Heart right ventricle (tissue), 16 donors: ENCODE measurements at regions of chr14 and their contacts with region 1.

Region 1: DNA sequence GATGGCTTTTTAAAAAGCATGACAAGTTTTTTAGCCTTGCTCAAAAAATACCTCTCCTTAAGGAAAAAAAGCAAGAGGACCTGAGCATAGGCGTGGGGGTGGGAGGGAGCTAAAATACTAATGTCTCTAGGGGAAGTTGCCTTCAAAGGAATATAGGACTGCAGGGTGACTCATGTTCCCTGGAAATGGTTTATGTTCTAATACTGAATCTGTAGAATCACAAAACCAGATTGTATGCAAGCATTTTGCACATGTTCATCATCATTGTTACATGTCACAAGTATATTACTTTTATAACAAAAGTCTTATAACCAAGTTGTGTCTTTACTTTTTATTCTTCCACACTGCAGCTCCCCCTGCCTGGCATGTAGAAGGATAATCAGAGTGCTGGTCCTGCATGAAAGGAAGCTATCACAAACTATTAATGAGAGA is 36.6 kb downstream of the GPR135 start:
- DNase-seq: no peak
- ATAC-seq: peak in 6 of 8 donors; percentile 21 to 48 (median 35)
- H3K4me3 ChIP-seq: no peak overlapping the region
- H3K27ac ChIP-seq: peak overlapping the region in 9 of 10 donors; percentile 17 to 74 (median 68)
- H3K4me1 ChIP-seq: peaks cover 0 to 63% (median 43%) of the 10 kb centered on the region in 9 donors
- H3K27me3 ChIP-seq: no peaks in the 10 kb centered on the region
- CTCF ChIP-seq: peak in 7 of 9 donors; percentile 30 to 66 (median 46)

Region 2: DNA sequence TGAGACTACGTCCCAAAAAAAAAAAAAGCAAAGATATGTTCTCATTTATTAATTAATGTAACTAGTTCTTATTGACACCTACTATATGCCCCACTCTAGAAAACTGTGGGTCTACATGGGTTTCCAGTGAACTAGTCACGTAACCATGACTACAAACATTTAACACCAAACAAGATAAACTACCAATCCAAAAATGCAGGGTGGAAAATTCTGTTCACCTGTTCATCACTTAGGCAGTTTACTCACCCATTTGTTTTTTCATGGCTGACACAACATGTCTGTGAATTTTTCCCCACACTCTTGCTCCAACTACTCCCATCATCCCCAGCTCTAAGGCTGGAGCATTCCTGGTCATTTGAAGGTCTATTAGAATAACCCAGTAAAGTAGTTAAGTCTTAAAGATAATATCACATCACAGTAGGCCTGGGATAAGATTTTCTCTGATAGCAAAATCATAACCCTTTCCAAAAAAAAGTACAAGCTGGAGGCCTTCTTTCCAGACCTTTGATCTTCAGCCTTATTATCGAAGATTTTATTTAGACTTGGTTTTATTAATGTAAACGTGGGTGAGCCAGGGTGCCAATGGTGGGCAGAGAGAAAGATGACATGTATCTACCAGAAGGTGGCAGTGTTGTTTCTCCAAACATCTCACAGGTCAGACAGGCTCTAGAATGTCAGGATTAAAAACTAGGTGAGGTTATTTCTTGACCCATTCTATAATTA is 301.7 kb before region 1 on chr14:
- intact Hi-C with region 1: loop called in 1 of 10 experiments (anchors 5 kb)
- DNase-seq: peak in 1 of 2 donors; percentile 32
- ATAC-seq: peak in 7 of 8 donors; percentile 79 to 91 (median 89)
- H3K4me3 ChIP-seq: no peak overlapping the region
- H3K27ac ChIP-seq: no peak overlapping the region
- H3K4me1 ChIP-seq: peaks cover 0 to 9% (median 0%) of the 10 kb centered on the region in 9 donors
- H3K27me3 ChIP-seq: no peaks in the 10 kb centered on the region
- CTCF ChIP-seq: peak; percentile 60 to 88 (median 81)

Region 3: GRCh38 chr14:59254146-59254941 is 174.3 kb before region 1 on chr14:
- intact Hi-C with region 1: loop called in 2 of 10 experiments (anchors 10 kb)
- DNase-seq: peak; percentile 60 to 89
- ATAC-seq: peak; percentile 84 to 94 (median 90)
- H3K4me3 ChIP-seq: peak overlapping the region in 1 of 10 donors; percentile 11
- H3K27ac ChIP-seq: peak overlapping the region; percentile 74 to 94 (median 86)
- H3K4me1 ChIP-seq: peaks cover 10 to 85% (median 59%) of the 10 kb centered on the region in 9 donors
- H3K27me3 ChIP-seq: no peaks in the 10 kb centered on the region
- CTCF ChIP-seq: peak in 2 of 9 donors; percentile 14 to 30

Region 4: DNA sequence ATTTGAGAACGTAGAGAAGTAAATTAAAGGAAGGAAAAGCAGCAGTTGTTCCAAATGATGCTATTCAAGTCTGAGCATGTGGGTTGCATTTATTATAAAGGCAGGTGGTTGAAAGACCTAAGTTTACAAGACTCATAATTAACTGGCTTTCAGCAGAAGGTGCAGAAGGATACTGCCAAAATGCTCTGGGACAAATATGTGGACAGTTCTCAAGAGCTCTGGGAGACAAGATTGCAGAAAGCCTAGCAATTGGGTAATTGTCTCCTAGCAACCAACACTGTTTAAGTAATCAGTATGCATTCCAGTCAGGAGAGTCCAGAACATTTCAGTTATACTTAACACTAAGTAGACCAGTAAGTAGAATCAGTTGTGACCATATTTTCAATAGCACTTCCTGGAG is 94.9 kb before region 1 on chr14:
- intact Hi-C with region 1: loop called in 7 of 10 experiments (anchors 5 to 10 kb)
- DNase-seq: peak in 1 of 2 donors; percentile 66
- ATAC-seq: peak; percentile 84 to 95 (median 92)
- H3K4me3 ChIP-seq: no peak overlapping the region
- H3K27ac ChIP-seq: peak overlapping the region; percentile 57 to 89 (median 86)
- H3K4me1 ChIP-seq: peaks cover 21 to 79% (median 71%) of the 10 kb centered on the region in 9 donors
- H3K27me3 ChIP-seq: no peaks in the 10 kb centered on the region
- CTCF ChIP-seq: no peak

Region 5: DNA sequence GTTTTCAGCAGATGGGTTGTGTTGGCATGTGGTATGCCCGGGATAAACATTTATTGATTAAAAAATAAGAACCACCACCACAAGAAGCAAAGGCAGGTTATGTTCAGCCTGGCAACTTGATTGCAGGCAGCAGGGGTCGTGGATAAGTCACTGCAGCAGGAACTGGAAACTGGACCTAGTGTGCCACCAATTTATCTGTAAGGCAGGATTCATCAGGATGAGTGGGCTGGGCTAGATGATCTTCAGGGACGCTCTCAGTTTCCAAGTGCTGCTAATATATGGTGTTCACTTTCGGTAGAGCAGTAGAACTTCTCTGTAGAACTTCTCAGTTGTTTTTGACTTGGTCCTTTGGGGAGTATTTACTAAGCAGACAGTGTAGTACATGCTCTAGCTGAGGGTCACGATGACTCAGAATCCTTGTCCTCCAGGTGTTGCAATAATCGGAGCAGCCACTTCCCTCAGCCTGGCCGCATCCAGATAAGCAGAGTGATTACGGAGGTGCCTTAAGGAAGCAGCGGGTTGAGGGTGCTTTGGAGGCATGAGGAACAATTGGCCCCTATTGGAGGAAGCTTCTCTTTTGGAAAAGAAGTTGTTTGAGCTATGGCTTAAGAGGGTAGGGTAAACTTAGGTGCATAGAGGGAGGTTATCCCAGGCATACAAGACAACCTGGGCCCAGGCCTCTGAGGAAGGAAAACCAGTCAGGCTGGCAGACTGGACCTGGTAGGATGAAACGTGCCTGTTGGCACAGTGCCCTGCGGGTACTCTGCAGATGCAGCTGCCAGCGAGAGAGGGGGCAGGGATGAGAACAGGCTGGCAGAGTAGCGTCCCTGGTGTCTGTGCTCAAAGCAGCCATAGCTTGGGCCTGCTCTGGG is 67.4 kb before region 1 on chr14:
- intact Hi-C with region 1: loop called in 1 of 10 experiments (anchors 5 kb)
- DNase-seq: peak; percentile 74 to 81
- ATAC-seq: peak; percentile 41 to 80 (median 72)
- H3K4me3 ChIP-seq: peak overlapping the region in 5 of 10 donors; percentile 0 to 38 (median 14)
- H3K27ac ChIP-seq: peak overlapping the region; percentile 21 to 91 (median 86)
- H3K4me1 ChIP-seq: peaks cover 13 to 87% (median 71%) of the 10 kb centered on the region in 9 donors
- H3K27me3 ChIP-seq: no peaks in the 10 kb centered on the region
- CTCF ChIP-seq: peak in 3 of 9 donors; percentile 27 to 31 (median 28)

Region 6: GRCh38 chr14:59377991-59378601 is 50.5 kb before region 1 on chr14:
- intact Hi-C with region 1: loop called in 3 of 10 experiments (anchors 5 kb)
- DNase-seq: peak in 1 of 2 donors; percentile 20
- ATAC-seq: peak; percentile 57 to 84 (median 74)
- H3K4me3 ChIP-seq: no peak overlapping the region
- H3K27ac ChIP-seq: peak overlapping the region in 8 of 10 donors; percentile 3 to 64 (median 54)
- H3K4me1 ChIP-seq: peaks cover 2 to 38% (median 18%) of the 10 kb centered on the region in 9 donors
- H3K27me3 ChIP-seq: no peaks in the 10 kb centered on the region
- CTCF ChIP-seq: no peak